ENCODE measurements at regions of chr11 and their contacts with region 1.

Region 1: GRCh38 chr11:47477323-47477722 is 28.4 kb upstream of the RAPSN start:
- DNase-seq: peak; percentile 91
- H3K4me3 ChIP-seq: no peak overlapping the region
- H3K27ac ChIP-seq: peak overlapping the region; percentile 62
- H3K4me1 ChIP-seq: peaks cover 26% of the 10 kb centered on the region
- H3K27me3 ChIP-seq: no peaks in the 10 kb centered on the region
- CTCF ChIP-seq: no peak

Region 2: DNA sequence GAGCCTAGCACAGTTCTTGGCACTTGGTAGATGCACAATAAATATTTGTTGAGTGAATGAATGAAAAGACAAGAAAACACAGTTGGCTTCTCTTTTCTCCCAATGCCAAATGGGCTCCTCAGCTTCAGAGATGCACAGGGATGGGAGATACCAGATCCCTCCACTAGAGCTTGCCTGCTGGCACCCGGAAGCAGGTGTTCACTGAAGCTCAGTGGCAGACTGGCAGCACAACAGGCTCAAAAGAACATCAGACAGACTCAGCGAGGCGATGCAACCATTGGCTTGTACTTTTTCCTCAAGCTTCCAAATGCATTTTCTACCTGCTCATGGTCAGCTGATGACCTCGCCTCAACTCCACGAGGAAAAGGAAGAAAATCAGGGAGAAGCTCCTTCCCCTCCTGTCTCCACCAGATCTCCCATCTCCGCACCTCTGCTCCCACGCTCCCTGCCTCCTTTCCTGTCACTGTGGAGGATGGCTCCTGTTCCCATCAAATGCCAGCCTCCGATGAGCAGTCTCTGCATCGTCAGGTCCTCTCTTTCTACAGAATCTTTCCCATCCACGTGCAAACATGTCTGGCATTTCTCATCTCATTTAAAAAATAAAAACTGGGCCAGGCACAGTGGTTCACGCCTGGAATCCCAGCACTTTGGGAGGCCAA is 34.2 kb before region 1 on chr11:
- CTCF ChIA-PET with region 1: no interaction called
- dilution Hi-C with region 1: loop called (anchors 5 kb)
- in situ Hi-C with region 1: no loop called
- intact Hi-C with region 1: no loop called
- DNase-seq: no peak
- H3K4me3 ChIP-seq: no peak overlapping the region
- H3K27ac ChIP-seq: no peak overlapping the region
- H3K4me1 ChIP-seq: no peaks in the 10 kb centered on the region
- H3K27me3 ChIP-seq: no peaks in the 10 kb centered on the region
- CTCF ChIP-seq: no peak

Region 3: GRCh38 chr11:47495011-47495855 is 17.9 kb after region 1 on chr11:
- CTCF ChIA-PET with region 1: no interaction called
- dilution Hi-C with region 1: no loop called
- in situ Hi-C with region 1: no loop called
- intact Hi-C with region 1: no loop called
- DNase-seq: no peak
- H3K4me3 ChIP-seq: no peak overlapping the region
- H3K27ac ChIP-seq: no peak overlapping the region
- H3K4me1 ChIP-seq: no peaks in the 10 kb centered on the region
- H3K27me3 ChIP-seq: no peaks in the 10 kb centered on the region
- CTCF ChIP-seq: no peak

Region 4: DNA sequence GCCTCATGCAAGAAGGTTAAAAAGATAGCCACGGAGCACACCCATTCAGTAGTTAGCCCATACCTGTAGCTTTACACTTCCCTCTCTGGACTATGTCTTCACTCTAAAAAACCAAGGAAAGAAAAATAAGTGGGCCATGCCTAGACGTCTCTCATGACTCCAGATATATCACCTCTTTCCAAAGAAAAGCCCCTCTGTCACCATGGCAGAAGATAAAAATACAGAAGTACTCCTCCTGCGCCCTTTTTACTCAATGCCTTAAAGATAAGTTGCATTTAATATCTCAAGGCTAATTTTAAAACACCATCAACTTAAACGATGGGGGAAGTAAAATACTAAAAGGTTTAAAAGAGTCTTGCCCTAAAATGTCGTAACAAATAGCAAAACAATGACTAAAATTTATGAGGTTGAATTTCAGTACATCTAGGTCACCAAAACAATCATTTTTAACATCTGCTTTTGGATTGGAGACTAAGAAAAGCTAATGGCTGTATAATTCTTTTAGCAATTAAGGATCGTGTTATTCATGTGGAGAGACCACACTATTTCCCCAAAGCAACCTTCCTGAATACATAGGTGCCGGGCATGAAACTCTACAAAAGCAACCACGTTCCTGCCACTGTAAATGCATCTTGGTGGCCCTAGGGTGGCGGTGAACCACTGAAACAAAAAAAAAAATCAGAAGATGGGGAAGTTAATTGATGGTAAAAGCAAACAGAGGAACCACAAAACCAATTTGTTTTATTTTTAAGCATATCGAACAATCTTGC is 29.7 kb after region 1 on chr11:
- CTCF ChIA-PET with region 1: no interaction called
- dilution Hi-C with region 1: no loop called
- in situ Hi-C with region 1: no loop called
- intact Hi-C with region 1: loop called (anchors 1 kb)
- DNase-seq: no peak
- H3K4me3 ChIP-seq: no peak overlapping the region
- H3K27ac ChIP-seq: peak overlapping the region; percentile 7
- H3K4me1 ChIP-seq: peaks cover 7% of the 10 kb centered on the region
- H3K27me3 ChIP-seq: no peaks in the 10 kb centered on the region
- CTCF ChIP-seq: no peak

Region 5: GRCh38 chr11:47616726-47617416 is 139.5 kb after region 1 on chr11:
- CTCF ChIA-PET with region 1: no interaction called
- dilution Hi-C with region 1: no loop called
- in situ Hi-C with region 1: no loop called
- intact Hi-C with region 1: loop called (anchors 10 kb)
- DNase-seq: peak; percentile 28
- H3K4me3 ChIP-seq: no peak overlapping the region
- H3K27ac ChIP-seq: no peak overlapping the region
- H3K4me1 ChIP-seq: no peaks in the 10 kb centered on the region
- H3K27me3 ChIP-seq: no peaks in the 10 kb centered on the region
- CTCF ChIP-seq: peak; percentile 43 to 74

Region 6: GRCh38 chr11:47786373-47786772 is 309.1 kb after region 1 on chr11:
- CTCF ChIA-PET with region 1: no interaction called
- dilution Hi-C with region 1: no loop called
- in situ Hi-C with region 1: no loop called
- intact Hi-C with region 1: no loop called
- DNase-seq: no peak
- H3K4me3 ChIP-seq: no peak overlapping the region
- H3K27ac ChIP-seq: no peak overlapping the region
- H3K4me1 ChIP-seq: no peaks in the 10 kb centered on the region
- H3K27me3 ChIP-seq: no peaks in the 10 kb centered on the region
- CTCF ChIP-seq: no peak